ENCODE measurements at regions of chr11 and their contacts with region 1.

Region 1: DNA sequence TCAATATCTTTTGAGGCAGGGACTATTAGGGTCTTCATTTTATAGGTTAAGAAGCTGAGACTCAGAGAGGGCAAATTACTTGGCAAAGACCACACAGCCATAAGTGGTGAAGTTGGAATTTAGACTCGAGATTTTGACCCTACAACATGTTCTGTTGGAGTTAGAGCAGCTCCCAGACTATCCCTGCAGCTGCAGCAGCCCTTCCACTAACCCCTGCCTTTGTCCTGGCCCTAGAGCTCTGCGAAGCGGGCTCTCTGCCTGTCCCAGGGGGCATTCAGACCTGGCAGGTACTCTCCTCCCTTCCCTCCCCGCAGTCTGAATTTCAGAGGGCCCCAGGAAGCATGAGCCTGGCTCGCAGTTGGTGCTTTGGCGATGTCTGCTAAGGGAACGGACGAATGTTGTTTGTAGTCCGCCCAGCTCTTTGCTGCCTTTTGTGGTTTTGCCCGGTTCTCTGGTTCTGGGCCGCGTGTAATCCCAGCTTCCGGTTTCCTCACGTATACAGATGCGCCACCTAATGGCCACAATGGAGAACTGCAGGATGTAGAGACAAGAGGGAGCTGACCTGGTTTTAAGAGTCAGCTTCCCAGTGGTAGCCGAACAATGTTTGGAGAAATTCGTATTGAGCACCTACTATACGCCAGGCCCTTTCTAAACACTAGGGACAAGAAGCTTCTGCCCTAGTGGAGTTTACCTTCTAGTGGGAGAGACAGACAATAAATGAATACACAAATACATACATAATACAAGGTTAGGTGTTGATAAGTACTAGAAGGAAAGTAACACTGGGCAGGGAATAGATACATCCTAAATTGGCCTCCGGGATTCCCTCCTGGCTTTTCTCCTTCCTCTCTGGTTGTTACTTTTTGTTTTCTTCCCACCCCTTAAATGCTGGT is 125.2 kb downstream of the ST3GAL4 start:
- DNase-seq: peak; percentile 39
- ATAC-seq: peak; percentile 87
- H3K4me3 Mint-ChIP-seq: peak overlapping the region; percentile 74
- H3K27ac Mint-ChIP-seq: peak overlapping the region; percentile 25
- H3K4me1 Mint-ChIP-seq: peaks cover 16% of the 10 kb centered on the region
- H3K27me3 Mint-ChIP-seq: peaks cover 3% of the 10 kb centered on the region
- CTCF ChIP-seq: peak; percentile 32

Region 2: GRCh38 chr11:125923012-125923579 is 557.6 kb before region 1 on chr11:
- CTCF ChIA-PET with region 1: interaction called, 9 read pairs
- POLR2A ChIA-PET with region 1: no interaction called
- intact Hi-C with region 1: loop called (anchors 1 kb)
- DNase-seq: no peak
- ATAC-seq: no peak
- H3K4me3 Mint-ChIP-seq: no peak overlapping the region
- H3K27ac Mint-ChIP-seq: no peak overlapping the region
- H3K4me1 Mint-ChIP-seq: no peaks in the 10 kb centered on the region
- H3K27me3 Mint-ChIP-seq: peaks cover 15% of the 10 kb centered on the region
- CTCF ChIP-seq: peak; percentile 21

Region 3: DNA sequence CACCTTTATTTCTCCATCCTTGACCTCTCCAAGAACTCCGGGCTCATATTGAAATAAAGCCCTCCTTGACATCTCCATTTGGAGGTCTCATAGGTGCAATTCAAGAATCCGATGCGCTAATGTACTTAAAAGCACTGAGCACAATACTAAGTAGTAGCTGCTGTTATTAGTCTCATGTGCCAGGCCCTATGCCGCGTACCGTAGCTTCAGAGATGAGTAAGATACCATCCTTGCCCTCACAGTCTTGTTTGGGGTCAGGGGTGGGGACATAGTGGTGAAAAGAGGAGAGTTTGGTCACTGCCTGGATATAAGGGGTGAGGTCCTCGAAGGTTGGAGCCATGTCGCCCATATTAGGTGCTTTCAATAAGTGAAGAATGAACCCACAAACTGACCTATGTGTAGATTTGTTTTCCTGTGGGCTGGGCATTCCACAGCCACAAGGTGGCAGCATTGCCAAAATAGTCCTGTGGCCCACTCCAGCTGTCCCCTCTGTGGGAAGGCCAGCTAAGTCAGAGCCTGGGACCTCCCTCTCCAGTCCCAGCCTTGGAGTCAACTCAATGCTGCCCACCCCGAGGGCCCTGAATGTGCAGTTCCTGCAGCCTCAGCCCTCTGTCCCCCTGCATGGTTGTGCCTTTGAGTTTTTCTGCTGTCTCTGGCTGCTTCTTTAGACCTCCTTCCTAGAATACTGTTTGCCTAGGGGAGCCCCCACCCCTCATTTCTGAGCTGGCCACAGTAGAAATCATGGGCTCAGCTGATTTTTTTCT is 170.2 kb before region 1 on chr11:
- CTCF ChIA-PET with region 1: interaction called, 36 read pairs
- POLR2A ChIA-PET with region 1: interaction called, 12 read pairs
- intact Hi-C with region 1: loop called (anchors 1 kb)
- DNase-seq: peak; percentile 35
- ATAC-seq: peak; percentile 61
- H3K4me3 Mint-ChIP-seq: no peak overlapping the region
- H3K27ac Mint-ChIP-seq: no peak overlapping the region
- H3K4me1 Mint-ChIP-seq: peaks cover 35% of the 10 kb centered on the region
- H3K27me3 Mint-ChIP-seq: no peaks in the 10 kb centered on the region
- CTCF ChIP-seq: peak; percentile 30

Region 4: DNA sequence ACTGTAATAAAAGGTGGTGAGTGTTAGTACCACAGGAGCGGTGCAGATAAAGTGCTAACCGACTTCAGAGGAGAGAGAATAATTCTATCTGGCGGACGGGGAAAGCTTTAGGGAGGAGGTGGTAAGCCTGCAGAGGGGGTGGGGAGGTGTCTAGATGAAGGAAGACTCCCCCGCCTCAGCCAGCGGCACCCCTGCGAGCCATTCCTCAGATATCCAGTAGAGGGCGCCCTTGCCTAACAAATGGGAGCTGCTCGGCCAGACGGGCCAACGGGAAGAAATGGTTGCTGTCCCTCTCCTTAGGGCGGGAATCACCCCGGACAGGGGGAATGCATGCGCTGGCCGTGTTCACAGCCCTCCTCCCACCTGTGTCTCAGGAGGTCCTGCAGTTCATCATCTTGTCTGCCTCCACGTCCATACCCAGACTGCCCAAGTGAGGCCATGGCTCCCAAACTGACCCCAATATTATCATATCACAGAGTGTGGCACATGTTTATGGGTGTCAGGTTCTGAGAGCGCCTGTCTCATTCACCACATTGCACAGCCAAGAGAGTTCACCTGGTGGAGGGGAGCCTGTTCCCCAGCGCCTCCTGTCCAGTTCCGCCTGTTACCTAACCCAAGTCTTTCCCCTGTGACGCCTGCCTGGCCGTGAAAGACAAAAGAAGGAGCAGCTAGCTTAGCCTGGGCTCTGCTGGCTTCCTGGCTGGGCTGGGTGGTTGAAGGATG is 39.7 kb before region 1 on chr11:
- CTCF ChIA-PET with region 1: interaction called, 118 read pairs
- POLR2A ChIA-PET with region 1: no interaction called
- intact Hi-C with region 1: loop called (anchors 1 kb)
- DNase-seq: peak; percentile 65
- ATAC-seq: peak; percentile 57
- H3K4me3 Mint-ChIP-seq: no peak overlapping the region
- H3K27ac Mint-ChIP-seq: no peak overlapping the region
- H3K4me1 Mint-ChIP-seq: peaks cover 4% of the 10 kb centered on the region
- H3K27me3 Mint-ChIP-seq: peaks cover 9% of the 10 kb centered on the region
- CTCF ChIP-seq: peak; percentile 70

Region 5: GRCh38 chr11:126465573-126466188 is 15.0 kb before region 1 on chr11:
- CTCF ChIA-PET with region 1: interaction called, 21 read pairs
- POLR2A ChIA-PET with region 1: interaction called, 4 read pairs
- intact Hi-C with region 1: no loop called
- DNase-seq: no peak
- ATAC-seq: peak; percentile 63
- H3K4me3 Mint-ChIP-seq: peak overlapping the region; percentile 71
- H3K27ac Mint-ChIP-seq: peak overlapping the region; percentile 41
- H3K4me1 Mint-ChIP-seq: peaks cover 40% of the 10 kb centered on the region
- H3K27me3 Mint-ChIP-seq: peaks cover 2% of the 10 kb centered on the region
- CTCF ChIP-seq: no peak